HepG2 (cell line): ENCODE measurements at regions of chr7 and their contacts with region 1.

Region 1: DNA sequence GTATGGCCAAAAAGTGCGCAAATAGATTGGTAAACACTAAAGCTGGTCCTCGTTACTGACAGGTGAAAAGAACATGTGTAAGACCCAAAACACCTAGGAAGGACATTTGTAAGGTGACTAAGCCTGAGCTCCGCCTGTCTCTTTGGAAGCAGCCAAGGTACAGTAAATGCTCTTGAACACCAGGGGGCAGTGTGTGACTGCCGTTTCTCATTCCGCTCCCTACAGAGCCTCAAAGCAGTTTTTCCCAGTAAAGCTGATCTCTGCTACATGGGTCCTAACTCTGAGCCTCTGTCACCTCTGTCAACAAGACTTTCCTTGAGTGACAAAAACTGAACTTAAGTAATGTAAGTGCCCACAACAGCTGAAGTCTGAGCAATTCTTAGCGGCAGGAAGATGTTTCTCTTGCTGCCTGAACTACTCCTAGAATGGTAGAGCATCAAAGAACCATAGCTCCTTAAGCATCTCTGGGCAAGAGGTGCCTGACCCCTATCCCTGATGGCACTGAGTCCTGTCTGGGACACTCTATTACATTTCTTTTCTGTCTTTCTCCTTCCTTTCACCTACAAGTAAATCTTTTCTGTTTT is 238.0 kb upstream of the INHBA start:
- DNase-seq: peak; percentile 69
- ATAC-seq: peak; percentile 71
- H3K4me3 ChIP-seq: no peak overlapping the region
- H3K27ac ChIP-seq: no peak overlapping the region
- H3K4me1 ChIP-seq: peaks cover 29% of the 10 kb centered on the region
- H3K27me3 ChIP-seq: no peaks in the 10 kb centered on the region; a peak in 1 of 5 replicates
- CTCF ChIP-seq: peak; percentile 91
- EP300 ChIP-seq: no peak
- POLR2A ChIP-seq: no peak
- RAD21 ChIP-seq: peak; percentile 75

Region 2: GRCh38 chr7:41979834-41980307 is 39.0 kb after region 1 on chr7:
- CTCF ChIA-PET with region 1: no interaction called
- POLR2A ChIA-PET with region 1: no interaction called
- in situ Hi-C with region 1: no loop called
- intact Hi-C with region 1: loop called (anchors 2 kb)
- DNase-seq: peak; percentile 3
- ATAC-seq: peak; percentile 85
- H3K4me3 ChIP-seq: no peak overlapping the region
- H3K27ac ChIP-seq: no peak overlapping the region
- H3K4me1 ChIP-seq: no peaks in the 10 kb centered on the region
- H3K27me3 ChIP-seq: peaks cover 0 to 4% of the 10 kb centered on the region in 2 experiments; a peak in 2 of 5 replicates
- CTCF ChIP-seq: peak; percentile 49
- EP300 ChIP-seq: no peak
- POLR2A ChIP-seq: no peak
- RAD21 ChIP-seq: no peak

Region 3: DNA sequence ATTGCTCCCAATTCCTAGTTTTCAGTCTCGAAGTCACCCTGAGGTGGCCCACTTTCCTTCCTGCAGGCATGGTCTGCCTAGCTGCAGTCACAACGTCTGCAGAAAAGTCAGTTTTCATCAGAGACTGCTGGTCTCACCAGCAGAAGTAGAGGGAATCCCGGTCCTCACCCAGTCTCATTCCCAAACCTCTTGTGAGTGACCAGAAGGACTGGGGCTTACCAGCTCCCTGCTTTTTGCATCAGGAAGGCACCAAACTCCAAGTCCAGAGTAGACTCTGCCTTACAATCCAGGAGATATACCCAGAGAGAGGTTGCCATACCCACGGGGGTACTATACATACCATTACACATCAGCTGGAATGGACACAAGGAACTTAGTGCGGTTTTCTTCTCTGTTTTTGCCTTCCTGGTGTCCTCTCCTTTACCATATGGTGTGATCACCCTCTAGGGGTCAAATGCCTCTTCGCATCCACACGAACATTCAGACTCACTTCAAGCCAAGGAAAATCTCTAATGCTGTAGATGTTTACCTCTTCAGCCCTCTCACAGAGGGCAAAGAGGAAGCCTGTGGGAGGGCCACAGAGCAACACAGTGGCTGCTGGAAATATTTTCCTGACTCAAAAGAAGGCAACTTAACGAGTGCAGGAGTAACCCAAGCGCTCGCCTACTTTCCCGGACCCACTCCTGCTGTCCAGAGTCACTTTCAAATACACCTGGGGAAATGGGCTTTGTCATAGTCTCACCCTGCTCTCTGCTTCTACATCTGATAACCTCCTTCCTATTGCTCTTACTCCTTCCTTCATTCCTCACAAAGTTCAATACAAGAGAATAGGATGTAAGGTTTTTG is 750.2 kb after region 1 on chr7:
- CTCF ChIA-PET with region 1: interaction called, 4 read pairs
- POLR2A ChIA-PET with region 1: no interaction called
- in situ Hi-C with region 1: loop called (anchors 10 kb)
- intact Hi-C with region 1: loop called (anchors 2 kb)
- DNase-seq: peak; percentile 16
- ATAC-seq: peak; percentile 92
- H3K4me3 ChIP-seq: no peak overlapping the region
- H3K27ac ChIP-seq: no peak overlapping the region
- H3K4me1 ChIP-seq: no peaks in the 10 kb centered on the region
- H3K27me3 ChIP-seq: no peaks in the 10 kb centered on the region
- CTCF ChIP-seq: peak; percentile 65
- EP300 ChIP-seq: no peak
- POLR2A ChIP-seq: no peak
- RAD21 ChIP-seq: no peak

Region 4: DNA sequence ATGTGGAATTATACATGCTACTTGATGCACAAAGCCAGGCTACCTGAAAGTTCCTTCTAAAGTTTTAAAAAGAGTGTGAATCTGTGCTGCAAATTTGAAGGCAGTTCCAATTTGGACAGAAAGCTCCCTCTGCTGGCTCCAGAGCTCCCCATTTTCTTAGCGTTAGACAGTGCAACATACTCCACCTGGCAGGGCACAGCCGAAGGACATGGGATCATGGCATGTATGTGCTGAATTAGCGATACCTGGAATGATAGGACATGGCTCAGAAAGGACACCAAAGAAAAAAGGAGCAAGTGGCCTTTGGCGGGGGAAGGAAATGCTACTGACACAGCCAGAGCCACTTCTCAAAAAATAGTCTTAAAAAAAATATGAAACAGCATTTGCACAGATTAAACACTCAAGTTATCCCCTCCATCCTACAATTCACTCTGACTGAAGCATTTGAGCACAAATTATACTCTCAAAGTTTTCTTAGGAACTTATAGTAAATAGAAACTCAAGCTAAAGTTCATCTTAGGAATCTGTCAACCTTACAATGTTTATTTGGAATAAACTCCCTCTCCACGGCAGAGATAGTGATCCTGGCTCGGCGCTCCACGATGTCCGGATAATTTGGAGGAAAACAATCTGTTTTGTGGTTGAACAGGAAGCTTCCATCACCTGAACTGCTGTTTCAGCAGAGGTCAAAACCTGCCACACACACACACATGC is 891.0 kb after region 1 on chr7:
- CTCF ChIA-PET with region 1: interaction called, 3 read pairs
- POLR2A ChIA-PET with region 1: no interaction called
- in situ Hi-C with region 1: no loop called
- intact Hi-C with region 1: loop called (anchors 1 kb)
- DNase-seq: peak; percentile 5
- ATAC-seq: peak; percentile 84
- H3K4me3 ChIP-seq: no peak overlapping the region
- H3K27ac ChIP-seq: no peak overlapping the region
- H3K4me1 ChIP-seq: no peaks in the 10 kb centered on the region
- H3K27me3 ChIP-seq: no peaks in the 10 kb centered on the region; a peak in 1 of 5 replicates
- CTCF ChIP-seq: peak; percentile 59
- EP300 ChIP-seq: no peak
- POLR2A ChIP-seq: no peak
- RAD21 ChIP-seq: no peak

Region 5: GRCh38 chr7:42843205-42843800 is 902.5 kb after region 1 on chr7:
- CTCF ChIA-PET with region 1: interaction called, 25 read pairs
- POLR2A ChIA-PET with region 1: no interaction called
- in situ Hi-C with region 1: loop called (anchors 5 kb)
- intact Hi-C with region 1: loop called (anchors 1 kb)
- DNase-seq: peak; percentile 31
- ATAC-seq: peak; percentile 98
- H3K4me3 ChIP-seq: no peak overlapping the region
- H3K27ac ChIP-seq: no peak overlapping the region
- H3K4me1 ChIP-seq: no peaks in the 10 kb centered on the region
- H3K27me3 ChIP-seq: no peaks in the 10 kb centered on the region
- CTCF ChIP-seq: peak; percentile 73
- EP300 ChIP-seq: no peak
- POLR2A ChIP-seq: no peak
- RAD21 ChIP-seq: peak; percentile 35; the same call in 1 of the 2 replicates

Region 6: GRCh38 chr7:42876182-42877068 is 935.6 kb after region 1 on chr7:
- CTCF ChIA-PET with region 1: interaction called, 12 read pairs
- POLR2A ChIA-PET with region 1: interaction called, 6 read pairs
- in situ Hi-C with region 1: no loop called
- intact Hi-C with region 1: loop called (anchors 1 kb)
- DNase-seq: peak; percentile 42
- ATAC-seq: peak; percentile 85
- H3K4me3 ChIP-seq: no peak overlapping the region
- H3K27ac ChIP-seq: no peak overlapping the region
- H3K4me1 ChIP-seq: no peaks in the 10 kb centered on the region
- H3K27me3 ChIP-seq: no peaks in the 10 kb centered on the region
- CTCF ChIP-seq: peak; percentile 65
- EP300 ChIP-seq: no peak
- POLR2A ChIP-seq: no peak
- RAD21 ChIP-seq: no peak